Activated CD4-positive, alpha-beta T cell treated with anti-CD3 and anti-CD28 coated beads, Interleukin-2, amount 10 ng/mL, durations not matched to agents 24 days and 14 days (primary cell): ENCODE measurements at regions of chr13 and their contacts with region 1.

Region 1: DNA sequence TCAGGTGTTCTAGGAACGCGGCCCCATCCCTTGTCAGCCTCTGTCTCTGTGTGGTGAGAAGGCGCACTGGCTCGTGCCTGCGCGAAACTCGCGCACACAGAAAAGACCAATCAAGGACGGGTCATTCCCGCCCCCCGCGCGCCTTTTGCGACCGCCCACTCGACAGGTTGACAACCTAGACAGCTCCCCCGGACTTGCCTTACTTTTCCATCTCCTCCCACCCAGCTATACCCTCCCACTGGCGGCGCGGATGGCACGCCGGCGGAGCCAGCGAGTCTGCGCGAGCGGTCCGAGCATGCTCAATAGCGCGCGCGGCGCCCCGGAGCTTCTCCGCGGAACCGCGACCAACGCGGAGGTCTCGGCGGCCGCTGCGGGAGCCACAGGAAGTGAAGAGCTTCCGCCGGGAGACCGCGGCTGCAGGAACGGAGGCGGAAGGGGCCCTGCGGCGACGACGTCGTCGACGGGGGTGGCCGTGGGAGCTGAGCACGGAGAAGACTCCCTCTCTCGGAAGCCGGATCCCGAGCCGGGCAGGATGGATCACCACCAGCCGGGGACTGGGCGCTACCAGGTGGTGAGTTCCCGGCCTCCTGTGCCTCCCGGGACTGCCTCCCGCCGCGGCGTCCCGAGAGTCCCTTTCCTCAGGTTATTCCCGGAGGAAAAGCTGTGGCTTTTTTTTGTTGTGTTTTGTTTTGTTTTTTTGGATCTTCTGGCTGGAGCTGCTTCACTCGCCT is at the start of gene NDFIP2:
- DNase-seq: peak; percentile 97
- H3K4me3 Mint-ChIP-seq: peak within 1 kb of the TSS; percentile 90
- H3K27ac Mint-ChIP-seq: peak within 1 kb of the TSS; percentile 98
- H3K4me1 Mint-ChIP-seq: peaks cover 57% of the 10 kb centered on the region
- H3K27me3 Mint-ChIP-seq: peaks cover 3% of the 10 kb centered on the region
- total RNA-seq, gene NDFIP2: 258 and 272 TPM in 2 replicates

Region 2: DNA sequence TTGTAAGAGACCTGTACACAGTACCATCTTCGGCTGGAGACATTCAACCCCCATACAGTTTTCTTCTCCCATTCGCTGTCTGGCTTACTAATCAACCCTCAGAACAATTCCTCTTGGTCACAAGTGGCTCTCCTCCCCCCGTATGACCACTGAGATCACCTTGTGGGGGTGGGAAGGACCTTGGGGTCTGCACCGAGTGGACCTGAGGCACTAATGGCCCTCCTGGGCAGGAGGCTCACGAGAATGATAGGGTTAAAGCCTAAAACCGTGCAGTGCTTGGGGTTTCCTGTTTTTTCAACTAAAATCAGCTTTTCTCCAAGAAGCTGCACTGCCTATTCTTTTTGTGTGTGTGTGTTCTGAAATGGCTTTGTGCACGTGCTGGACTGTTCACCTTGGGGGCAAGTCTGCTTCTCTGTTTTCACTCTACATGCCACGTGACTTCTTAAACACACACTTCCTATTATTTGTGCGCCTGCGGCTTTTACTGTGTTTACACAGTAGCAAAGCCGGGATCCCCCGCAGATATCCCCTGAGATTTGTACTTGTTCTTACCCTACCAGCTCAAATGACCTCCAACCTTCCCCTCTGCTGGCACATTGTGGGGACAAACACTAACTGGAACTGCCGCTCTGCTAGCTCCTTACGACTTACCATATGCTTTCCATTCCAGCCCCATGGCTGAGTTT is 87.4 kb before region 1 on chr13:
- intact Hi-C with region 1: loop called (anchors 1 kb)
- DNase-seq: peak; percentile 78
- H3K4me3 Mint-ChIP-seq: peak overlapping the region; percentile 80
- H3K27ac Mint-ChIP-seq: peak overlapping the region; percentile 83
- H3K4me1 Mint-ChIP-seq: peaks cover 47% of the 10 kb centered on the region
- H3K27me3 Mint-ChIP-seq: no peaks in the 10 kb centered on the region

Region 3: GRCh38 chr13:79423801-79424642 is 57.1 kb before region 1 on chr13:
- intact Hi-C with region 1: loop called (anchors 1 kb)
- DNase-seq: no peak
- H3K4me3 Mint-ChIP-seq: no peak overlapping the region
- H3K27ac Mint-ChIP-seq: no peak overlapping the region
- H3K4me1 Mint-ChIP-seq: peaks cover 19% of the 10 kb centered on the region
- H3K27me3 Mint-ChIP-seq: no peaks in the 10 kb centered on the region

Region 4: GRCh38 chr13:79451500-79451962 is 29.6 kb before region 1 on chr13:
- intact Hi-C with region 1: loop called (anchors 1 kb)
- DNase-seq: peak; percentile 96
- H3K4me3 Mint-ChIP-seq: peak overlapping the region; percentile 86
- H3K27ac Mint-ChIP-seq: peak overlapping the region; percentile 99
- H3K4me1 Mint-ChIP-seq: peaks cover 66% of the 10 kb centered on the region
- H3K27me3 Mint-ChIP-seq: no peaks in the 10 kb centered on the region

Region 5: DNA sequence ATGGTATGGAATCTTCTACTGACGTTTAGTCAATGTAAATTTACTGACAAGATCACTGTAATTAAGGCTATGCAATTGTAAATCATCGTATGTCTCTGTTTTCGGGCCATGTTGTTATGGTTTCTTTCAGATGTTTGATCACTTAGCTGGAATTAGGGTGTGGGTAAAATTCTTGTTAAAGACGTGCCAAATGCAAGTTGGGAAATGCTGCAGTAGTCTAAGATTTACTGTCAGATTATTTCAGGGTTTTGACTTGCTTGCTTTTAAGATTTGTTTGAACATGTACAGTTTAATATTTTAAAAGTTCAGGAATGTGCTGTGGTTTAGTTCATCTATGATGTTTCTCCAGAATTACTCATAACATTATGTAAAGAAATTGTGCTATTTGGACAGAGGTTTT is 10.6 kb after region 1 on chr13:
- intact Hi-C with region 1: loop called (anchors 1 kb)
- DNase-seq: peak; percentile 74
- H3K4me3 Mint-ChIP-seq: peak overlapping the region; percentile 77
- H3K27ac Mint-ChIP-seq: peak overlapping the region; percentile 92
- H3K4me1 Mint-ChIP-seq: peaks cover 83% of the 10 kb centered on the region
- H3K27me3 Mint-ChIP-seq: no peaks in the 10 kb centered on the region

Region 6: DNA sequence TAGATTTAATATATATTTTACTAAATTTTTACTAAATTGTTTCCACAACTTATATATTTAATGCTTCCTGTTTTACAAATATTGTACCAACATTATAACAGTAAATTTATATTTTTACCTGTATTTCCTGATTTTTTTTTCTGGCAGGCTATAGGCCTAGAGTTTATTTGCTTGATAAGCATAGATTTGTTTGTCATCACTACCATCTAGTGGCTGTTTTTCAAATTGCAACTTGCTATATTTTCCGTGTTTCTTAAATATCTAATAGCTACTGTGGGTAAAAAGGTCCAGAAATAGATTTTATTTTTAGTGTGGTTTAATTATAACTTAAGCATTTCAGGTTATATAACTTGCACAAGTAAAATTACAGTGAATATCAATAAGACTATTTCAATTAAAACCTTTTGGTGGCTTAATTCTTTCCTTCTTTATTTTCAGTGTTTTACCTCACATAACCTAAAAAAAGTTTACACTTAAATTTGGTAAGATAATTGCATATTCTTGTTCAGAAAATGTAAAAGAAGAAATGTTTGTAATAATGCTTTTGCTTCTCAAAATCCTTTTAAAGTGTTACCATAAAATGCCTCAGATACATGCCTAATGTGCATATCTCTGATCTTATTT is 60.4 kb after region 1 on chr13:
- intact Hi-C with region 1: loop called (anchors 1 kb)
- DNase-seq: peak; percentile 77
- H3K4me3 Mint-ChIP-seq: no peak overlapping the region
- H3K27ac Mint-ChIP-seq: no peak overlapping the region
- H3K4me1 Mint-ChIP-seq: peaks cover 19% of the 10 kb centered on the region
- H3K27me3 Mint-ChIP-seq: no peaks in the 10 kb centered on the region

Region 7: GRCh38 chr13:80012251-80012650 is 531.1 kb after region 1 on chr13:
- intact Hi-C with region 1: no loop called
- DNase-seq: no peak
- H3K4me3 Mint-ChIP-seq: no peak overlapping the region
- H3K27ac Mint-ChIP-seq: no peak overlapping the region
- H3K4me1 Mint-ChIP-seq: no peaks in the 10 kb centered on the region
- H3K27me3 Mint-ChIP-seq: no peaks in the 10 kb centered on the region